ENCODE measurements at regions of chr15 and their contacts with region 1.

Region 1: GRCh38 chr15:83066734-83067637 is at the start of gene BTBD1:
- DNase-seq: peak; percentile 98
- H3K4me3 Mint-ChIP-seq: peak within 1 kb of the TSS; percentile 66
- H3K27ac Mint-ChIP-seq: peak within 1 kb of the TSS; percentile 71
- H3K4me1 Mint-ChIP-seq: no peaks in the 10 kb centered on the region
- H3K27me3 Mint-ChIP-seq: no peaks in the 10 kb centered on the region
- CTCF ChIP-seq: no peak
- total RNA-seq, gene BTBD1: 73.2 and 77.3 TPM in 2 replicates

Region 2: GRCh38 chr15:83011271-83012075 is 55.5 kb before region 1 on chr15 and contains the start of gene C15orf40:
- CTCF ChIA-PET with region 1: interaction called, 8 read pairs
- intact Hi-C with region 1: loop called (anchors 5 kb)
- DNase-seq: peak; percentile 95
- H3K4me3 Mint-ChIP-seq: peak within 1 kb of the TSS; percentile 95
- H3K27ac Mint-ChIP-seq: peak within 1 kb of the TSS; percentile 97
- H3K4me1 Mint-ChIP-seq: peaks cover 36% of the 10 kb centered on the region
- H3K27me3 Mint-ChIP-seq: no peaks in the 10 kb centered on the region
- CTCF ChIP-seq: peak; percentile 44
- total RNA-seq, gene C15orf40: 34.0 and 40.7 TPM in 2 replicates

Region 3: GRCh38 chr15:83046558-83047127 is 20.3 kb before region 1 on chr15:
- CTCF ChIA-PET with region 1: no interaction called
- intact Hi-C with region 1: no loop called
- DNase-seq: no peak
- H3K4me3 Mint-ChIP-seq: no peak overlapping the region
- H3K27ac Mint-ChIP-seq: no peak overlapping the region
- H3K4me1 Mint-ChIP-seq: peaks cover 18% of the 10 kb centered on the region
- H3K27me3 Mint-ChIP-seq: no peaks in the 10 kb centered on the region
- CTCF ChIP-seq: no peak

Region 4: DNA sequence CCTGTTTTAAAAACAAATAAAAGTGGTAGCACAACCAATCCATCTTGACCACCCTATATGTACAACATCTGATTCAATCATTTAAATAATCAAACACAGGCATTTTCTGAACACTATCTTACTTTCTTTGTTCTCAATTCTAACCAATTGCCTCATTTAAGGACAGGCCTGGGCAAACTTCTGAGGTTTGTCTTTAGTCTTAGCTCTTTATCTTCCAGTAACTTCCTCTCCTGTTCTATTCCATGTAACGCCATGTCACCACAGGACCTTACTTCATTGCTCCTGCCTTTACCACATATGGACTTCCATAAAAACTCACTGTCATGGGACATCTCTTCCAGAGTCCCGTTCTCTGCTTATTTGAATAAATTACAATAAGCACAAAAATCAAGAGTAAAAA is 125.8 kb after region 1 on chr15:
- CTCF ChIA-PET with region 1: no interaction called
- intact Hi-C with region 1: loop called (anchors 5 kb)
- DNase-seq: no peak
- H3K4me3 Mint-ChIP-seq: no peak overlapping the region
- H3K27ac Mint-ChIP-seq: no peak overlapping the region
- H3K4me1 Mint-ChIP-seq: peaks cover 22% of the 10 kb centered on the region
- H3K27me3 Mint-ChIP-seq: no peaks in the 10 kb centered on the region
- CTCF ChIP-seq: no peak